Adrenal gland (tissue), 19 donors: ENCODE measurements at regions of chr20 and their contacts with region 1.

Region 1: DNA sequence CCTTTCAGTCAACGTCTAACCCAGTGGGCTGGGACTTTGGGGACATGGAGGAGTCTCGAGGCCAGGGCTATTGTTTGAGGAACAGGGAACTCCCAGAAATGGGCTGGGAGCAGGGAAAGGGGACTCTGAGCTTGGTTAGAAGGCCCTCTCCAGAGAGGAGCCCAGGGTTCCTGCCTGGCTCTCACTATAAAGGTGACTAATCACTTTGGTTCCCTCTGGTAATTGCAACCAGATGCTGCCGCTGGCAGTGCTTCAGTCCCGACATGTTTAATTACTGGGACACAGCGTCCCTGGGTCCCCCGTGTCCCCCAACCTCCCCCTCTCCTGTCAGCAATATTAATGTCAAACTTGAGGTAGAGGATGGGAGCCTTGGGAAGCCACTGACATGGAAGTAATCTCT is 5.0 kb upstream of the GDF5 start:
- DNase-seq: no peak
- H3K4me3 ChIP-seq: no peak overlapping the region
- H3K27ac ChIP-seq: no peak overlapping the region
- H3K4me1 ChIP-seq: no peaks in the 10 kb centered on the region
- H3K27me3 ChIP-seq: no peaks in the 10 kb centered on the region
- CTCF ChIP-seq: no peak
- POLR2A ChIP-seq: no peak

Region 2: DNA sequence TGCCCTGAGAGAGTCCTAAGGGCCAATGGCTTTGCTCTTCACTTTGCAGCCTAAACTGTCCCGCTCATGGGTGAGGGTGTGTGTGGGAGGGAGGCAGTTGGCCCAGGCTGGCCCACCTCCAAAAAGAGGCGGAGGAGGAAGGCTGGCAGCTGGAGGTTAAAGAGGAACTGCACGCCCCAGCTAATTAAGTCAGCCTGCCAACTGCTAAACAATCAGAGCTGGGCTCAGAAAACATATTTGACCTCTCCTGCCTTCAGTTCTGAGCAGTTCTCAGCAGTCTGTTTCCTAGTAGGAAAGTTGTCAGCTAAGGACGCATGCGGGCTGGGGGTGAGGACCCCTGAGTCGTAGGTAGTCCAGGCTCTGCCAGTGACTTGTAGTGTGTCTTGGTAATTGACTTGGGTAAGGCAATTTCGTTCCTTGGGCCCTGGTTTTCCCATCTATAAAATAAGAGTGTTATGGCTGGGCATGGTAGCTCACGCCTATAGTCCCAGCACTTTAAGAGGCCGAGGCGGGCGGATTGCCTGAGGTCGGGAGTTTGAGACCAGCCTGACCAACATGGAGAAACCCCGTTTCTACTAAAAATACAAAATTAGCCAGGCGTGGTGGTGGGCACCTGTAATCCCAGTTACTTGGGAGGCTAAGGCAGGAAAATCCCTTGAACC is 504.4 kb before region 1 on chr20:
- intact Hi-C with region 1: no loop called
- DNase-seq: peak in 5 of 7 donors; percentile 37 to 63 (median 45)
- H3K4me3 ChIP-seq: no peak overlapping the region
- H3K27ac ChIP-seq: peak overlapping the region in 1 of 5 donors; percentile 43
- H3K4me1 ChIP-seq: peaks cover 0 to 6% of the 10 kb centered on the region in 2 donors
- H3K27me3 ChIP-seq: no peaks in the 10 kb centered on the region
- CTCF ChIP-seq: no peak
- POLR2A ChIP-seq: no peak

Region 3: DNA sequence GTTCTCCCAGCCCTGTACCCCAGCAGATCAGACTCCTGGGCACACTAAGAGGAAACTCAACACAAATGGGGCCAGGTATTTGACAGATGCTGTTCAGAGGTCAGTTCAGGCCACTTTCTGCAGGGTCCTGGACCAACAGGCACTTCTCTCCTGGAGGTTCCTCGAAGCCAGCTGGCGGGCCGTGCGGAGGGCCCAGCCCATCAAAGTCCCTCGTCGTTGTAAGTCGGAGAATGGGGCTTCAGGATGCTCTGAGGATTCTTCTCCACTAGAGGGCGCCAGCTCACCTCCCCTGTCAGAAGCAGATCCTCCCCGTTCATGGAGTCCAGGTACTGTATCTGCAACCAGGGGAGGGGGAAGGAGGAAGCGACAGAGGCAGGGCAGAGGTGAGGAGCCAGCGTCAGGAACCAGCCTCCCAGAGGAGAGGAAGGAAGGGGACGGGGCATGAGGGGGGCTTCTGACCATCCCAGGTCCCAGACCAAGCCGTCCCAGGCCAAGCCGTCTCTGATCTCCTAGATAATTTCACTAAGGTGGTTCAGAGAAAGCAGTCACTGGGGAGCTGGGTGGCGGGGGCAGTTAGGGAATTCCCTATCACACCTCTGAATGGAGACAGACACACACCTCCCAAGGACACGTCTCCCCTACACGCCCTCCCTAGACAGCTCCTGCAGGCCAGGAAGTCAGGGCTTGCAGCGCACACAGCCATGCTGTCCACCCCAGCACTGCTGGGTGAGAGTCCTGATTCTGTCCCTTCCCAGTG is 139.1 kb before region 1 on chr20:
- intact Hi-C with region 1: loop called (anchors 5 kb)
- DNase-seq: peak; percentile 81 to 95 (median 87)
- H3K4me3 ChIP-seq: no peak overlapping the region
- H3K27ac ChIP-seq: peak overlapping the region in 1 of 5 donors; percentile 59
- H3K4me1 ChIP-seq: peaks cover 10 to 20% of the 10 kb centered on the region in 2 donors
- H3K27me3 ChIP-seq: no peaks in the 10 kb centered on the region
- CTCF ChIP-seq: peak; percentile 88 to 94 (median 91)
- POLR2A ChIP-seq: no peak